Right cardiac atrium (tissue), 5 donors: ENCODE measurements at regions of chr4 and their contacts with region 1.

Region 1: DNA sequence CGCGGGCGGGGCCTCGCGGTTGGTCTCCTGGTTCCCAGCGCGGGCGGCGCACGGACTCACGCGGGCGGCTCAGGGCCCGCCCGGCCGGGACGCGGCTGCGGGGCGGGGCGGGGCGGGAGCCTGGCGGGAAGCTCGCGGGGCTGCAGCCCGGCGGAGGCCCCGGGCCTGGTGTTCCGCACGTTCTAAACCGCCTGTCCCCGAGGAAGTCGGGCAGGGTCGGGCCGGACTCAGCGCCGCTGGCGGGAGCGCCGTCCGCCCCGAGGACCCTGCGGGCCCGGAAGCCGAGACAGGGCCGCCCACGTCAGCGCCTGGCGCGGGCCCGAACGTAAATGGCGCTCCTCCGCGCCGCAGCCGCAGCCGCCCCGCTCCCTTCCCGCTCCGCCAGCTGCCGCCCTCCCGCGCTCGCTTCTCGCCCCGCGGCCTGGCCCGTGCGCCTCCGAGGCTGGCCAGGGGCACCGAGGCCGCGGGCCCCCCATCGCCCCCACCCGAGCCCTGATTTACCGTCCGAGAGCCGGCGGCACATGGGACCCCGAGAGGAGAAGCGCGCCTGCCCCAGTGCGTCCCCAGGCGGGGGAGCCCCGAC is 309 bp upstream of the CTBP1 start:
- DNase-seq: peak; percentile 89 to 96 (median 95)
- ATAC-seq: peak; percentile 63 to 73
- H3K4me3 ChIP-seq: peak overlapping the region; percentile 93
- H3K27ac ChIP-seq: peak overlapping the region; percentile 88
- H3K4me1 ChIP-seq: peaks cover 21% of the 10 kb centered on the region
- H3K27me3 ChIP-seq: no peaks in the 10 kb centered on the region

Region 2: DNA sequence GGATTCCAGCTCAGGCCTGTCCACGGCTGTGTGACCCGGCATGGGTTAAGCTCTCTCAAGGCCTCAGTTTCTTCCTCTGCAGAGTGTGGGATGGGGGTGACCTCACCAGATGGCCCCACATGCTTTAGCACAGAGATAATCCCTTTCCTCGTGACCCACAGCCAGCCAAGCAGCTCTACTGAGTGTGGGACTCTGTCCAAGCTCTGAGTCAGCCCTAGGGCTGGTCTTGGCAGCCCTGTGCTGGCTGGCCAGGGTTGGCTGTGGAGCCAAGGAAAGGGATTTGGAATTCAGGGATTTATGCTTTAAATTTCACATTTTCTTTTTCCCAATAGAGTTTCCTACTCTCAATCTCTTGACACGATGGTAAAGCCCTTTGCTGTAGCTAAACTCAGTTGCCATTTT is 57.1 kb before region 1 on chr4:
- intact Hi-C with region 1: no loop called
- DNase-seq: peak; percentile 91 to 94 (median 92)
- ATAC-seq: peak; percentile 95
- H3K4me3 ChIP-seq: no peak overlapping the region
- H3K27ac ChIP-seq: peak overlapping the region; percentile 86
- H3K4me1 ChIP-seq: peaks cover 18% of the 10 kb centered on the region
- H3K27me3 ChIP-seq: no peaks in the 10 kb centered on the region

Region 3: DNA sequence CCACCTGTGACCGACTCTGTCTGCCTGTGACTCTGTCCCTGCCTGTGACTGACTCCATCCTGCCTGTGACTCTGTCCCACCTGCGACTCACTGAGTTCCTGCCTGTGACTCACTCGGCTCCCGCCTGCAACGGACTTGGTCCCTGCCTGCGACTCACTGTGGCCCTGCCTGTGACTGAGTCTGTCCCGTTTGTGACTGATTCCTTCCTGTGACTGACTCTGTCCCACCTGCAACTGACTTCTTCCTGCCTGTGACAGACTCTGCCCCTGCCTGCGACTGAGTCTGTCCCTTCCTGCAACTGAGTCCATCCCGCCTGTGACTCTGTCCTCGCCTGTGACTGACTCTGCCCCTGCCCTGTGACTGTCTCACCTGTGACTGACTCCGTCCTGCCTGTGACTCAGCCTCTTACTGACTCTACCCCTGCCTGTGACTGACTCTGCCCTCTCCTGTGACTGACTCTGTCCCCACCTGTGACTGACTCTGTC is 88.2 kb after region 1 on chr4:
- intact Hi-C with region 1: loop called in 2 of 4 experiments (anchors 2 to 5 kb)
- DNase-seq: peak; percentile 10 to 42 (median 26)
- ATAC-seq: no peak
- H3K4me3 ChIP-seq: no peak overlapping the region
- H3K27ac ChIP-seq: no peak overlapping the region
- H3K4me1 ChIP-seq: no peaks in the 10 kb centered on the region
- H3K27me3 ChIP-seq: no peaks in the 10 kb centered on the region